SK-N-SH (cell line): ENCODE measurements at regions of chr4 and their contacts with region 1.

Region 1: GRCh38 chr4:165331359-165331758 is 3.9 kb downstream of the MSMO1 start:
- DNase-seq: no peak
- H3K4me3 ChIP-seq: no peak overlapping the region
- H3K27ac ChIP-seq: no peak overlapping the region
- H3K4me1 ChIP-seq: peaks cover 1 to 15% of the 10 kb centered on the region in 2 experiments; a peak in 3 of 4 replicates
- H3K27me3 ChIP-seq: no peaks in the 10 kb centered on the region
- CTCF ChIP-seq: no peak
- EP300 ChIP-seq: no peak
- RAD21 ChIP-seq: no peak

Region 2: GRCh38 chr4:165059386-165059785 is 272.0 kb before region 1 on chr4:
- CTCF ChIA-PET with region 1: no interaction called
- POLR2A ChIA-PET with region 1: no interaction called
- DNase-seq: peak; percentile 33
- H3K4me3 ChIP-seq: no peak overlapping the region
- H3K27ac ChIP-seq: no peak overlapping the region
- H3K4me1 ChIP-seq: no peaks in the 10 kb centered on the region; a peak in 1 of 4 replicates
- H3K27me3 ChIP-seq: no peaks in the 10 kb centered on the region; the same call in 1 of the 2 replicates
- CTCF ChIP-seq: no peak
- EP300 ChIP-seq: no peak
- RAD21 ChIP-seq: no peak

Region 3: GRCh38 chr4:165343353-165344191 is 12.2 kb after region 1 on chr4:
- CTCF ChIA-PET with region 1: interaction called, 10 read pairs
- POLR2A ChIA-PET with region 1: no interaction called
- DNase-seq: no peak
- H3K4me3 ChIP-seq: no peak overlapping the region
- H3K27ac ChIP-seq: no peak overlapping the region
- H3K4me1 ChIP-seq: no peaks in the 10 kb centered on the region
- H3K27me3 ChIP-seq: no peaks in the 10 kb centered on the region
- CTCF ChIP-seq: peak; percentile 56
- EP300 ChIP-seq: no peak
- RAD21 ChIP-seq: peak; percentile 67